ENCODE measurements at regions of chrX and their contacts with region 1.

Region 1: GRCh38 chrX:103343105-103343504 is 13.1 kb downstream of the TCEAL7 start:
- DNase-seq: peak; percentile 46 to 72 (median 69)
- H3K4me3 ChIP-seq: no peak overlapping the region
- H3K27ac ChIP-seq: no peak overlapping the region
- H3K4me1 ChIP-seq: peaks cover 0 to 4% (median 1%) of the 10 kb centered on the region in 4 experiments
- H3K27me3 ChIP-seq: peaks cover 0 to 4% (median 0%) of the 10 kb centered on the region in 5 experiments

Region 2: GRCh38 chrX:103329991-103330390 is 13.1 kb before region 1 on chrX and contains the start of gene TCEAL7:
- CTCF ChIA-PET with region 1: no interaction called
- POLR2A ChIA-PET with region 1: no interaction called
- DNase-seq: no peak
- H3K4me3 ChIP-seq: peak within 1 kb of the TSS in 5 of 7 experiments; percentile 2 to 62 (median 33)
- H3K27ac ChIP-seq: no peak within 1 kb of the TSS
- H3K4me1 ChIP-seq: peaks cover 0 to 6% (median 0%) of the 10 kb centered on the region in 4 experiments
- H3K27me3 ChIP-seq: peaks cover 0 to 18% (median 3%) of the 10 kb centered on the region in 5 experiments

Region 3: DNA sequence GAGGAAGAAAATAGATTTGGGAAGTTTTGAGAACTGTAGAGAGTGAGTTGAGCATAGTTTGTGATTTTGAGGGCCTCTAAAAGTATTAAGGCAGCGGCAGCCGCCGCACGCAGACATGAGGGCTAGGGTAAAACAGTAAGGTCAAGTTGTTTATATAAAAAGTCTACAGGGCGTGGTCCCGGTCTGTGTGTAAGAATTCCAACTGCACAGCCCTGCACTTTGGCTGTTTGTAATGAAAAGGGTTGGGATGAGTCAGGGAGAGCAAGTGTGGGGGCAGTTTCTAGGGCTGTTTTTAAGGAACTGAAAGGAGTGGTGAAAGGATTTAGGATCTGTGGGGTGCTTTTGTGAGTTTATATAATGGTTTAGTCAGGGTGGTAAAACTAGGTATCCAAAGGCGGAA is 88.2 kb after region 1 on chrX:
- CTCF ChIA-PET with region 1: no interaction called
- POLR2A ChIA-PET with region 1: no interaction called
- DNase-seq: no peak
- H3K4me3 ChIP-seq: no peak overlapping the region
- H3K27ac ChIP-seq: no peak overlapping the region
- H3K4me1 ChIP-seq: no peaks in the 10 kb centered on the region
- H3K27me3 ChIP-seq: no peaks in the 10 kb centered on the region

Region 4: GRCh38 chrX:103464774-103465117 is 121.6 kb after region 1 on chrX:
- CTCF ChIA-PET with region 1: interaction called, 15 read pairs
- POLR2A ChIA-PET with region 1: no interaction called
- DNase-seq: peak; percentile 74 to 90 (median 85)
- H3K4me3 ChIP-seq: peak overlapping the region; percentile 52 to 91 (median 63)
- H3K27ac ChIP-seq: no peak overlapping the region
- H3K4me1 ChIP-seq: peaks cover 0 to 4% (median 0%) of the 10 kb centered on the region in 4 experiments
- H3K27me3 ChIP-seq: no peaks in the 10 kb centered on the region

Region 5: DNA sequence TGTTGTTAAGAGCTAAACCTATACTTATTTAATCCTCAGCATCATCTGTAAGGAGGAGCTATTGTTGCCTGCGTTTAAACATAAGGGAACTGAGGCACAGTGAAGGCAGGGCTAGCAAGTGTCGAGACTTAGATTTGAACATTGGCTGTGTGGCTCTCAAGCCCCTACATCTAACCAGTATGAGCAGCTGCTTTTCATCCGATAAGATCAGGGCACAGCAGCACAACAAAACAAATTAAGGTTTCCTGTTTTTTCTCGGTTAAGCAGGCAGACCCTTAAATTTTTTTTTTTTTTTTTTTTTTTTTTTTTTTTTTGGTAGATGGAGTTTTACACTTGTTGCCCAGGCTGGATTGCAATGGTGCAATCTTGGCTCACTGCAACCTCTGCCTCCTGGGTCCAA is 140.6 kb after region 1 on chrX:
- CTCF ChIA-PET with region 1: no interaction called
- POLR2A ChIA-PET with region 1: no interaction called
- DNase-seq: peak in 2 of 3 donors; percentile 23 to 37
- H3K4me3 ChIP-seq: no peak overlapping the region
- H3K27ac ChIP-seq: no peak overlapping the region
- H3K4me1 ChIP-seq: peaks cover 0 to 9% (median 2%) of the 10 kb centered on the region in 4 experiments
- H3K27me3 ChIP-seq: no peaks in the 10 kb centered on the region